Activated T-helper 1 cell treated with anti-CD3 and anti-CD28 coated beads, Interleukin-12 subunit alpha, Interleukin-12 subunit beta, Interleukin-2, Interleukin-4 antibody, amounts not matched to agents 30 ng/mL and 10 ng/mL and 1 ng/mL, durations not matched to agents 14 hours and 24 hours and 36 hours (primary cell): ENCODE measurements at regions of chr18 and their contacts with region 1.

Region 1: GRCh38 chr18:4157352-4157751 is 297.8 kb downstream of the DLGAP1 start:
- DNase-seq: no peak
- H3K4me3 Mint-ChIP-seq: no peak overlapping the region
- H3K27ac Mint-ChIP-seq: no peak overlapping the region
- H3K4me1 Mint-ChIP-seq: no peaks in the 10 kb centered on the region
- H3K27me3 Mint-ChIP-seq: no peaks in the 10 kb centered on the region

Region 2: DNA sequence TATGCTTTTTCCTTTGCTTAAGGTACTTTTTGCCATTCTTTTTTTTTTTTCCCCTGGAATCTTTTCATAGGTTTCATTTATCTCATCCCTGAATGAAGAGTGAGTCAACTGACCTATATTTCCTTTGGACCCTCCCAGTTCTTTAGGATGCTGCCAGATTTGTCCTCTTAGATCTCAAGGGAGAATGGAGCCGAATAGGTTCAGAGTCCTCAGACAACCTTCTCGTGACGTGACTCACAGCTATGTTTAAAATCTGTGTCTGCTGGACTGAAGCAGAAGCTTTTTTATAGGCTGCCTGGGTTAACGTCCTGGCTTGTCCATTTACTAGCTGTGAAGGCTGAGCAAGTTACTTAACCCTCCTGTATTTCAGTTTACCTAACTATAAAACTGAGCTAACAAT is 60.9 kb before region 1 on chr18:
- intact Hi-C with region 1: loop called (anchors 10 kb)
- DNase-seq: no peak
- H3K4me3 Mint-ChIP-seq: no peak overlapping the region
- H3K27ac Mint-ChIP-seq: no peak overlapping the region
- H3K4me1 Mint-ChIP-seq: no peaks in the 10 kb centered on the region
- H3K27me3 Mint-ChIP-seq: no peaks in the 10 kb centered on the region